Activated CD4-positive, alpha-beta memory T cell treated with anti-CD3 and anti-CD28 coated beads, Interleukin-2, amount 10 ng/mL, durations not matched to agents 7 days and 5 days (primary cell): ENCODE measurements at regions of chr2 and their contacts with region 1.

Region 1: DNA sequence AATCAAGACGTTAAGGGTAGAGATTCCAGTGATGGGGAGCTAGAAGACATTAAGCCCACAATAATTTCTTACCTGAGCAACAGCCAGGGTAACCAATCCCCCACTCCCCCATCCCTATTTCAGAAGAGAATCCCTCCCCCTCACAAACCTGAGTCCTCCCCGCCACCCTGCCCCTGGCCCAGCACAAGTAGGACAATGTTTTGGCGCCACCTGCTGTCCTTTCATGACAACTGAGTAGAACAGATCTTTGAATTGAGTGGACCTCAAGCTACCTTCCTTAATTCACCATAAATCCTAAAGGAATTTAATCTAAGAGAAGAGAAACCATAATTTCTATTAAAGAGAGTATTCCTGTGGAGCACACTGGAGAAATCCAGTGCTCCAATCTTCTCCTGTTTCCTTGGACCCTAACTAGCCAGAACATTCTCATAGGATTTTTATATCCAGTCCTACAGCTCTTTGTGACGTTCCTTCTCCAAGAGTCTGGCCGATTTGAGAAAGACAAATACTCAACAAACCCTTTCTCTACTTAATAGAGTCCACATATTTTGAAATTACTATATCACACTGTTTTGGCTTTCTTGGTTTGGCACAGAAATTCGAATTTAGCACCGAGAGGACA is 41.1 kb downstream of the NHEJ1 start:
- DNase-seq: peak; percentile 63
- H3K4me3 Mint-ChIP-seq: no peak overlapping the region
- H3K27ac Mint-ChIP-seq: no peak overlapping the region
- H3K4me1 Mint-ChIP-seq: peaks cover 10% of the 10 kb centered on the region
- H3K27me3 Mint-ChIP-seq: no peaks in the 10 kb centered on the region

Region 2: DNA sequence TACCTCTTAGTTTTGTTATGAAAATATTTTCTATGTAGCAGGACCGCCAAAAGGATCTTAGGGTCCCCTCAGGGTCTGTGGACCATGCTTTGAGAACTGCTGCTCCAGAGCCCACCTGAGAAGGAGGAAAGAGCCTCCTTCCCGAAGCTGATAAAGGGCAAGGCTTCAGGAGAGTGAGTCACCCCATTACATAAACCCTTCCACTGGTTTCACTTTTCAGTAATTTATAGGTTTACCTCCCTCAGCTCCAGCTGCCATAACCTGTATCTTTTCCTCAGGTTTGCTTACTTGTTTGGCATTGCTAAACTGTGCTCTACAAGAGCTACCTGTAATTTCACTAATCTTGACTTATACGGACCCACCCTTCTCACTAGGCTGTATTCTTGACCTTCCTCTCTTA is 402.3 kb before region 1 on chr2:
- CTCF ChIA-PET with region 1: no interaction called
- POLR2A ChIA-PET with region 1: no interaction called
- DNase-seq: no peak
- H3K4me3 Mint-ChIP-seq: no peak overlapping the region
- H3K27ac Mint-ChIP-seq: no peak overlapping the region
- H3K4me1 Mint-ChIP-seq: peaks cover 28% of the 10 kb centered on the region
- H3K27me3 Mint-ChIP-seq: no peaks in the 10 kb centered on the region

Region 3: DNA sequence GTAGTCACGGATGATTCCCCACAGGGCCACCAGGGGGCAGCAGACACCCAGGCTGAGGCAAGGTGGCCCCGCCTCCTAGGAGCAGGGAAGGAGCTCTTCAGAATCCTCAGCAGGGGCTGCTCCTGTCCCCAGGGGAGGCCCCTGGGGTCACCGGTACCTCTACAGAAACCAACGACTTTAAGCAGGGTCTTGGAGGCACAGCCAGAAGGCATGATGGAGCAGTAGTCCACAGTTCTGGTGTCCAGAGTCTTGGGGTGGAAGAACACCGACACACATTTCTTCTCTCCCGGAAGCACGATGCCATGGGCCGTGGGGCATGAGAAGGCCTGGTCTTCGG is 89.7 kb before region 1 on chr2:
- CTCF ChIA-PET with region 1: interaction called, 18 read pairs
- POLR2A ChIA-PET with region 1: no interaction called
- DNase-seq: peak; percentile 76
- H3K4me3 Mint-ChIP-seq: no peak overlapping the region
- H3K27ac Mint-ChIP-seq: no peak overlapping the region
- H3K4me1 Mint-ChIP-seq: no peaks in the 10 kb centered on the region
- H3K27me3 Mint-ChIP-seq: peaks cover 23% of the 10 kb centered on the region

Region 4: DNA sequence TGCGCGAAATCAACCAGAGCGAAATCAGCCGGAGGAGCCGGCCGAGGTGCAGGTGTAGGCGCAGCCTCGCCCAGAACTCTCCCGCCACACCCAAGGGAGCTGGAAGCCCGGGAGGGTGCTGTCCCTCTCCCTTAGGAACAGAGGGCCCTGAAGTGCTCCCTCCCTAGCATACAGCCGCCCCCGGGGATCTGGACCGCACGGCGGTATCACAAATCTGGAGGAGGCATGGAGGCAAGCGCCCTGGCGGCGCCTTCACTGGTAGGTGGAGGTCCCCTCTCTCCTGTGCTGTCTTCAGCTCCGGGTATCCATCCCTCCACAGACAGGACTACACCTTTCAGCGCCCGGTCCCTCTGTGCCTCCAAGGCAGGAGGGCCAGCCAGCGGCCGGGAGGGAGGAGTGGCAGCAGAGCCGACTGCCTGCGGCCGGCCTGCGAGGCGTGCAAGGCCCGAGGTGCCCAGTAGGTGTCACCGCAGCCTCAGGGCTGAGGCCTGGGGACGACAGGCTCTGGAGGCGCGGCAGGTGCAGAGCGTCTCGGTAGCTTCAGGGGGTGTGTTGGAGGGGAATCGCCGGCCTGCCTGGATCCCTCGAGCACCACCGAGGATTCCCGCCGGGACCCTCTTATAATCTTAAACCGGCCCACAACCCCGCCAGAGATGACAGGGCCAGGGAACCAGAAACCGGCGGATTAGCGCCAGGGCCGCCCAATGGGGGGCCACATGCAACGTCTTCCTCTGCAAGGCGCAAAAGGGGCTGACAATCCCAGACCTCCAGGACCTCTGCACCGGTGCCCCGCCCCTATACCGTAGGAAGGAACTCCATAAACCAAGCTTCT is 61.6 kb before region 1 on chr2:
- CTCF ChIA-PET with region 1: interaction called, 115 read pairs
- POLR2A ChIA-PET with region 1: no interaction called
- DNase-seq: peak; percentile 78
- H3K4me3 Mint-ChIP-seq: no peak overlapping the region
- H3K27ac Mint-ChIP-seq: no peak overlapping the region
- H3K4me1 Mint-ChIP-seq: peaks cover 18% of the 10 kb centered on the region
- H3K27me3 Mint-ChIP-seq: peaks cover 63% of the 10 kb centered on the region

Region 5: DNA sequence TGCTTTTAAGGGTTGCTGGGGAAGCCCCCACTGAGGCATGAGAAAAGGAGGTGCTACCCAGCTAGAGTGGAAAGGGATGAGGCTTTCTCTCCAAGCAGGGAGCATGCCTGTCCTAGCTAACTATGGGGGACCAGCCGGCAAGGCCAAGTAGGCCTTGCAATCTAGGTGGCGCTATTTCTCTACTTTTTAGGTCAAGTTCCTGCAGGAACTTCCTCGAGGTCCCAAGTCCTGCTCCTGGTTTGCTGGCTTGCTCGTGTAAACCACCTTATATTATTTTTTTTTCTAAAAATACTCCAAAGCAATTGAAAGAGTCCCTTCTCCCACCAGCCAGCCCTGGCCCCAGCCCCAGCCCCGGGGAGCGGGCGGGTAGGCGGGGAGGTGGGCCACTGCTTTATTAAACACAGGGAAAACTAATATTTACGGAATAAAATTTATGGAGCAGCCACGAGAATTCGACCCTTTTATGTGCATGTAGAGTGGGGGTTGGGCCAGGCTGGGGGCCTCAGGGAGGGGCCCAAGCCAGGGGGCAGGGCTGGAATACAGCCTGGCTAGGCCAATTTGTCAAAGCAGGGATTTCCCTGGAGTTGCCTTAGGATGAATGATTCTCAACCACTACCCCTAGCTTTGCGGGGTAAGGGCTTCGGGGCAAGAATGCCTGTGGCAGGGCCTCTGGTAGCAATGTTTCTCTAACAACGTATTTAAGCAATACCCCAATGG is 46.0 kb before region 1 on chr2:
- CTCF ChIA-PET with region 1: interaction called, 28 read pairs
- POLR2A ChIA-PET with region 1: no interaction called
- DNase-seq: no peak
- H3K4me3 Mint-ChIP-seq: no peak overlapping the region
- H3K27ac Mint-ChIP-seq: no peak overlapping the region
- H3K4me1 Mint-ChIP-seq: no peaks in the 10 kb centered on the region
- H3K27me3 Mint-ChIP-seq: no peaks in the 10 kb centered on the region

Region 6: DNA sequence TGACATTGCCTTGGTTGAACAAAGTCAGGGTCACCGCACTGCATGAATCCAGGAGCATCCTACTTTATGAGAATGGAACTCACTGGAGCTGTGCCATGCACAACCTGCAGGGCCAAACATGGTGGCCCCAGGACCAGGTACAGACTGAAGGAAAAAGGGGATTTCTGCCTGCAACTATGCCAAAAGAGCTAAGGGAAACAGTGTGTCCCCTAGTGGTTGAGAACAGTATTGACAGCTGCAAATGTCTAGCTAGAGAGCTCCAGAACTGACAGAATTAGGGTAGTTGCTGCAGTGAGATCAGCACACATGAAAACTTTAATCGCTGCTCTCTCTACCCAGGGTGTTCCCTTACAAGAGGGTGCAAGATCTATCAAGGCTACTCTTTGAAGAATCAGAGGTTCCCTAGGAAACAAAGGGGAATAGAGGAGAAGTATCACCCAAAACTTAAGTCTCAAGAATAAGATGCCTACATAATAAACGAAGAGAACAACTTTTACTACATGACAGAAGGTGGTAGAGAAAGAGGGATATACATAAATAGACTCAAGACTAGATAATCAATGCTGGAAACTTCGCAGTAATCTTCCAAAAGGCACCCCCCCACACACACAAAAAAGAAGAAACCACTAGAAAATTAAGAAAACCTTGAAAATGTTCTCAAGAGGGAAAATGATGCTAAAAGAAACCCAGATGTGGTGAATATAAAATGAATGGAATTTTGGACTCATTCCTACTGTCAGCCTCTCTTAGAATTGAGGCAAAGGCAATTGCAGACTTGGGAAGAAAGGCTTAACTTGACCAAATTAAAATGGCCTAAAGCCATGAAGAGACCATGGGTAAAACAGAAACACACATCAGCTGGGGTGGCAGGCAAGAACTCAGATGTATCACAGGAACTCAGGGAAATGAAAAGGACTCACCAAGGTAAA is 15.2 kb before region 1 on chr2:
- CTCF ChIA-PET with region 1: interaction called, 34 read pairs
- POLR2A ChIA-PET with region 1: no interaction called
- DNase-seq: no peak
- H3K4me3 Mint-ChIP-seq: no peak overlapping the region
- H3K27ac Mint-ChIP-seq: no peak overlapping the region
- H3K4me1 Mint-ChIP-seq: peaks cover 5% of the 10 kb centered on the region
- H3K27me3 Mint-ChIP-seq: no peaks in the 10 kb centered on the region

Region 7: DNA sequence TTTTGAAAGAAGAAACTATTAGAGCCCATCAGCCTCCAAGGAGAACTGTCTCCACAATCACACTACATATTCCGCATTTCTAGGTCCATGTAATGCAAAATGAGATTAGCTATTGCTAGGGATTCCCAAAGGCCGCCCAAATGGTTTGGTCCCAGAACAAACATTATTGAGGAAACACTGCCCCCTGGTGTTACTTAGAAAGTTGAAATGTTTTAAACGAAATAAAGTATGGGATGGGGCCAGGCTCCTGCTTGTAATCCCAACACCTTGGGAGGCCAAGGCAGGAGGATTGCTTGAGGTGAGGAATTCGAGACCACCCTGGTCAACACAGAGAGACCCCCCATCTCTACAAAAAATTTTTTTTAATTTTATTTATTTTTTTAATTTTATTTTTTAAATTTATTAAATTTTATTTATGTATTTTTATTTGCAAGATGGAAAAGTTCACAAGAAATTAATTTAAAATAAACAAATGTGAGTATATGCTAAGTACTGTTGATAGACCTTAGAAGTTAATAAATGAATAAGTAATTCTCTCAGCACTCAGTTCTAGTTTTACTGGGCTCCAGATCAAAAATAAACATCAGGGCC is 35.6 kb after region 1 on chr2:
- CTCF ChIA-PET with region 1: interaction called, 14 read pairs
- POLR2A ChIA-PET with region 1: no interaction called
- DNase-seq: peak; percentile 27
- H3K4me3 Mint-ChIP-seq: no peak overlapping the region
- H3K27ac Mint-ChIP-seq: no peak overlapping the region
- H3K4me1 Mint-ChIP-seq: peaks cover 9% of the 10 kb centered on the region
- H3K27me3 Mint-ChIP-seq: no peaks in the 10 kb centered on the region